Lower leg skin (tissue), 4 donors: ENCODE measurements at regions of chr5 and their contacts with region 1.

Region 1: GRCh38 chr5:141805874-141806595 is 72.2 kb downstream of the PCDH1 start:
- DNase-seq: no peak
- H3K4me3 ChIP-seq: no peak overlapping the region
- CTCF ChIP-seq: no peak
- POLR2A ChIP-seq: no peak

Region 2: GRCh38 chr5:141760193-141760592 is 45.8 kb before region 1 on chr5:
- intact Hi-C with region 1: loop called (anchors 2 kb)
- DNase-seq: no peak
- H3K4me3 ChIP-seq: no peak overlapping the region
- CTCF ChIP-seq: no peak
- POLR2A ChIP-seq: no peak